Prostate gland (tissue), 2 donors: ENCODE measurements at regions of chrX and their contacts with region 1.

Region 1: DNA sequence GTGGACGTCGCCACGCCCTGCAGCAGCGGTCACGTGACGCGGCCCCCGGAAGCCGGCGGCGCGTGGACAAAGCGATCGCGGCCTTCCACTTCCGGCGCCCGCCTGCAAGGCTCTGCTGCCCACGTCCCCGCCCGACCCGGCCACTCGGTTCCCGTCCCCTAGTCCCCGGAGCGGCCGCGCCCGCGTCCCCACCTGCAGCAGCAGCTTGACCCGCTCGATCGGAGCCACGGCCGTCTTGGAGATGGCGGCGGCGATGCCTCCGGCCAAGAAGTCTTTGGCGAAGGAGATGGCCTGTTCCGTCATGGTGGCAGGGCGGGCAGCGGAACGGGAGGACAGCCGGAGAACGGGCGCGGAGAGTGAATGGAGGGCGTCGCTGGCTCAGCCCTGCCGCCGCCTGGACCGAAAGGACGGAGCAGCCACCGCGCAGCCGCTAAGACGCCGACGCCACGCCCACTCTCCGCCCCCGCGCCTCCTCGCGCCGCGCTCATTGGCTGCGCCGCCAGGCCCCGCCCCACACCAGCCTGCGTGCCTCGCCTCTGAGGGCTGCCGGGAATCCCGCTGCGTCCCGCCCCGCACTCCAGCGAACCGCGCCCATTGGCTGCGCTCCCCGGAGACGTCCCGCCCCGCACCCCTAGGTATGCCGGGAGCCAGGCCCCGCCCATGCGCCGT is at the start of gene SLC25A6:
- DNase-seq: peak; percentile 99
- H3K4me3 ChIP-seq: peak within 1 kb of the TSS; percentile 98 to 100
- H3K27ac ChIP-seq: peak within 1 kb of the TSS; percentile 94 to 96
- H3K4me1 ChIP-seq: peaks cover 7% of the 10 kb centered on the region
- H3K27me3 ChIP-seq: no peaks in the 10 kb centered on the region
- CTCF ChIP-seq: peak in 1 of 4 experiments; percentile 20
- POLR2A ChIP-seq: peak; percentile 55
- total RNA-seq, gene SLC25A6: 252 to 358 TPM

Region 2: DNA sequence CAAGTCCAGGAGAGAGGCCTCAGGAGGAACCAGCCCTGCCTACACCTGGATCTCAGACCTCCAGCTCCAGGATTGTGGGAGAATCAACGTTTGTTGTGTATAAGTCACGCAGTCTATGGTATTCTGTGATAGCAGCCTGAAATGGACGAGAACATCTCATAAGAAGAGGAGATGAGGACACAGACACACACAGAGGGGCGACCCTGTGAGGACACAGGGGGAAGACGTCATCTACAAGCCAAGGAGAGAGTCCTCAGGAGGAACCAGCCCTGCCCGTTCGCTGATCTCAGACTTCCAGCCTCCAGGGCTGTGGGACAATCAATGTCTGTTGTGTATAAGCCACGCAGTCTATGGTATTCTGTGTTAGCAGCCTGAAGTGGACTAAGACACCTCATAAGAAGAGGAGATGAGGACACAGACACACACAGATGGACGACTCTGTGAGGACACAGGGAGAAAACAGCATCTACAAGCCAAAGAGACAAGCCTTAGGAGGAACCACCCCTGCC is 124.8 kb after region 1 on chrX:
- intact Hi-C with region 1: no loop called
- DNase-seq: no peak
- H3K4me3 ChIP-seq: no peak overlapping the region
- H3K27ac ChIP-seq: no peak overlapping the region
- H3K4me1 ChIP-seq: no peaks in the 10 kb centered on the region
- H3K27me3 ChIP-seq: no peaks in the 10 kb centered on the region
- CTCF ChIP-seq: no peak
- POLR2A ChIP-seq: no peak

Region 3: GRCh38 chrX:1591102-1591900 is 199.5 kb after region 1 on chrX and contains the start of gene AKAP17A:
- intact Hi-C with region 1: loop called (anchors 10 kb)
- DNase-seq: peak; percentile 93
- H3K4me3 ChIP-seq: peak within 1 kb of the TSS; percentile 66 to 98
- H3K27ac ChIP-seq: peak within 1 kb of the TSS; percentile 68 to 76
- H3K4me1 ChIP-seq: no peaks in the 10 kb centered on the region
- H3K27me3 ChIP-seq: no peaks in the 10 kb centered on the region
- CTCF ChIP-seq: peak in 2 of 4 experiments; percentile 43 to 44
- POLR2A ChIP-seq: peak; percentile 80
- total RNA-seq, gene AKAP17A: 45.5 to 97.7 TPM